Activated naive CD4-positive, alpha-beta T cell treated with anti-CD3 and anti-CD28 coated beads for 36 hours (primary cell): ENCODE measurements at regions of chr3 and their contacts with region 1.

Region 1: DNA sequence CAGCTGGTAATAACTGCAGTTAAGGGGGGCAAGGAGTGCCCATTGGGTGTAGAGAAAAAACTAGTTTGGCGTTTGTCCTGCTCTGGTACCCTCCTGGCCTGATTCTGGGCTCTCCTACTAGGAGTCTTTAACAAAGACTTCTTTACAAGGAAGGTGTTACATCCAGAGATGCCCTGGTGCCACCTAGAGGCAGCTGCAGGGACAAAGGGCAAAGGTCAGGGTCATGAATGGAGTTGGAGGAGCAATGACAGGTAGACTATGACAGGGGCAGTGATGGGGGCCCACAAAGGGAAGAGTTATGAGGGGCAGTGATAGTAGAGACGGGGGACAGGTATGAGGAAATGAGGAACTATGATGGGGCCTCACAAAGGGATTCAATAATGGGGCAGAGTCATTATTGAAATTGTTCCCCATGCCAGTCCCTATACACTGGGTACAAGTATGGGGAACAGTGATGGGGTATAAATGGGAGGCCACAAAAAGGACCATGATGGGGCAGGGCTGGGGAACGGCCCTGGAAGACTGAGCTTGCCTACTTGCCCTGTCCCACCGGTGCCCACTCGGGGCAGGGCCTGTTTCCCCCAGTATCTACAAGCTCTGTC is 7.9 kb downstream of the CCDC71 start:
- DNase-seq: peak; percentile 85
- H3K4me3 Mint-ChIP-seq: no peak overlapping the region
- H3K27ac Mint-ChIP-seq: no peak overlapping the region
- H3K4me1 Mint-ChIP-seq: peaks cover 10% of the 10 kb centered on the region
- H3K27me3 Mint-ChIP-seq: no peaks in the 10 kb centered on the region

Region 2: GRCh38 chr3:48949376-48949717 is 208.9 kb before region 1 on chr3:
- CTCF ChIA-PET with region 1: no interaction called
- intact Hi-C with region 1: no loop called
- DNase-seq: no peak
- H3K4me3 Mint-ChIP-seq: no peak overlapping the region
- H3K27ac Mint-ChIP-seq: no peak overlapping the region
- H3K4me1 Mint-ChIP-seq: peaks cover 34% of the 10 kb centered on the region
- H3K27me3 Mint-ChIP-seq: no peaks in the 10 kb centered on the region

Region 3: DNA sequence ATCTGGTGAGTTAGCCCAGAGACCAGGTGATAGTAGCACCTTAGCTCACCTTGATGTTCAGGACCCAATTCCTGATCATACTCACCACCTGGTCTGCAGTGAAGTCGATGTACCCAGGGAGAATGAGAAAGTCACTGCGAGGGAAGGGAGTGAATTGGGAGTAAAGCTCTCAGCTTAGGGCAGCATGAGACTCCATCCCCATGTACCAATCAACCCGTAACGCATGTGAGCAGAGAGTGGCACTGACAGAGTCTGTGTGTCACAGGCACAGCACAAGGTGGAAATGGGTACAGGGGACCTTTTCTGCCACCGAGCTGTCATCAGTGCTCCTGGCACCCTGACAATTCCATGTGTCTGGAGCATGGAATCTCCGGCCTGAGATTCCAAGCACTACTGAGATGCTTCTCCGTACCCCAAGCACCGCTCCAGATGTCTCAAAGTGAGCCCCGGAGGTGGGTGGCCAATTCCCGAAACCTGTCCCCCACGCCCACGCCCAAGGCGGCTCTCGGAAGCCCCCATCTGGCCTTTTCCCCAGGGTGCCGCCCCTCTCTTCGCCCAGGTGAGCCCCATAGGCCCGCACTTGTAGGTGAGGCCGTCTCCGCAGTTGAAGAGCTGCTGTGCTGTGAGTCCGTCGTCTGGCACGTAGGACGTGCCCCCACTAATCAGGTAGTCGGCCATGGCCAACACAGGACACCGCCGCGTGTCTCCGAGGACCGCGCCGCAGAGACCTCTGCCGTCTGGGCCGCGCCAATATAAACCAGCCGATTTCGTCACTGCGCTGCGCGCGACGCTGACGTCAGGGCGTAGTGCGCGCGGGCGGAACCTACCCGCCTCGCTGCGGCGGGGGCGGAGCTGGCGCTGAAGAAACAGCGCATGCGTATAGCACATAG is 129.3 kb before region 1 on chr3 and contains the start of gene IMPDH2:
- CTCF ChIA-PET with region 1: no interaction called
- intact Hi-C with region 1: loop called (anchors 1 kb)
- DNase-seq: peak; percentile 94
- H3K4me3 Mint-ChIP-seq: peak within 1 kb of the TSS; percentile 91
- H3K27ac Mint-ChIP-seq: peak within 1 kb of the TSS; percentile 89
- H3K4me1 Mint-ChIP-seq: peaks cover 53% of the 10 kb centered on the region
- H3K27me3 Mint-ChIP-seq: no peaks in the 10 kb centered on the region
- total RNA-seq, gene IMPDH2: 565 to 593 TPM

Region 4: DNA sequence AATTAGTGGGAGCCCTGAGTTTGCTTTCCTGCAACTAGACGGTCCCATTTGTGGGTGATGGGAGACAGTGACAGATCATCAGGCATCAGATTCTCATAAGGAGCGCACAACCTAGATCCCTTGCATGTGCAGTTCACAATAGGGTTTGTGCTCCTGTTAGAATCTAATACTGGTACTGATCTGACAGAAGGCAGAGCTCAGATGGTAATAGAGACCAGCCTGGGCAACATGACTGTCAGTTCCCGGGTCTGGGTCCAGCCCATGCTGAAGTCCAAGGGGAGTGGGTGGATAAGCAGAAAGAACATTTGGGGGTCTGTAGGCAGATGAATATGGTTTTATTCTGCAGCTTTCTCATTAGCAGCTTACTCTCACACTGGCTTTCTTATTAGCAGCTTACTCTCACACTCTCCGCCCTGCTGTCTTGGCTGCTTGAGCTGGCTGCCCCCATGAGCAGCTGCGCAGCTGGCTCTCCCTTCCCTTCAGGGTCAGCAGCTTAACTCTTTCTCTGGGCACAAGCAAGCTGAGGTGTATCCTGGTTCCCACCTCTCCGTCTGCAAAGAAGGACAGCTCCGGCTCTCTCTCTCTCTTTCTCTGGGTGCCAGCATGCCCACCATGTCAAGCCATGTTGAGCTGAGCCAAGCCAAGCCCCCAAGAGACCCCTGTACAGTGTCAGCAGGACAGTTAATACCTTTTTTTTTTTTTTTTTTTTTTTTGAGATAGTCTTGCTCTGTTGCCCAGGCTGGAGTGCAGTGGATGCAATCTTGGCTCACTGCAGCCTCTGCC is 59.7 kb after region 1 on chr3:
- CTCF ChIA-PET with region 1: no interaction called
- intact Hi-C with region 1: no loop called
- DNase-seq: no peak
- H3K4me3 Mint-ChIP-seq: no peak overlapping the region
- H3K27ac Mint-ChIP-seq: no peak overlapping the region
- H3K4me1 Mint-ChIP-seq: no peaks in the 10 kb centered on the region
- H3K27me3 Mint-ChIP-seq: no peaks in the 10 kb centered on the region

Region 5: DNA sequence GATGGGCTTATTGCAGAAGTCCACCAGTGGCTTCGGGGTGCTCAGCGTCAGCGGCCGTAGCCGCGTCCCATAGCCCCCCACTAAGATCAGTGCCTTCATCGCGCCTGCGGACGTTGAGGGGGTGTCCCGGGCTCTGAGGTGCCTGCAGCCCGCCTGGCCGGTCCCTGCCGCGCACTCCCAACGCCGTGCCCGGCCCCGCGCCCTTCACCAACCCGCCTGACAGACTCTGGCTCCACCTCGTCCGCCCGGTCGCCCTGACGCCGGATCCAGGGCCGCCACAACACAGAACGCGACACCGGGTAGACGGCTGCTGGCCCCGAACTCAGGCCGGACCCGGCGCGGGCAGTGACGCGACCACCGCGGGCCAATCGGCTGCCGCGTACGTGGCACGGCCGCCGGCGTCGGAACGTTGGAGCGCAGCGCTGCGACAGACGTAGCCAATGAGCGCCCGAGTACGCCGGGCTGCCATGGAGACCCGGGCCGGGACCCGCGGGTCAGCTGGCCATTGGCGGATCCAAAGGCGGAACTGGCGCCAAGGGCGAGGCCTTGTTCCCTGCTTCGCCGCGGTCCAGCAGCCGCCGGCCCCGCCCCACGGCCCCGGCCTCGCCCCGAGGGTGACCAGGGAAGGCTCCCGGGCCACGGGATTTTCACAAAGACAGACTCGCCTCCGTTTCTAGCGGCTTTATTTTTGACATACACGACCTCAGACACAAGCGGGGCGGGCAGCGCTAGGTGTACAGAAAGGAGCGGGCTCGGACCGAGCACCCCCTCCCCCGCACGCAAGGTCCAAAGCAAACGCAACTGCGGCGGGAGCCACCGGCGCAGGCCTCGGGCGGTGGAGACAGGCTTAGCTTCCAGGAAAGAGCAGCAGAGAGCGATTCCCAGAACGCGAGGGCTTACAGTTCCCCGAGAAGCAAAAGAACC is 565.7 kb after region 1 on chr3 and contains the start of gene GMPPB:
- CTCF ChIA-PET with region 1: no interaction called
- intact Hi-C with region 1: no loop called
- DNase-seq: peak; percentile 96
- H3K4me3 Mint-ChIP-seq: peak within 1 kb of the TSS; percentile 96
- H3K27ac Mint-ChIP-seq: peak within 1 kb of the TSS; percentile 95
- H3K4me1 Mint-ChIP-seq: peaks cover 33% of the 10 kb centered on the region
- H3K27me3 Mint-ChIP-seq: no peaks in the 10 kb centered on the region
- total RNA-seq, gene GMPPB: 25.6 to 27.4 TPM